ENCODE measurements at regions of chr22 and their contacts with region 1.

Region 1: DNA sequence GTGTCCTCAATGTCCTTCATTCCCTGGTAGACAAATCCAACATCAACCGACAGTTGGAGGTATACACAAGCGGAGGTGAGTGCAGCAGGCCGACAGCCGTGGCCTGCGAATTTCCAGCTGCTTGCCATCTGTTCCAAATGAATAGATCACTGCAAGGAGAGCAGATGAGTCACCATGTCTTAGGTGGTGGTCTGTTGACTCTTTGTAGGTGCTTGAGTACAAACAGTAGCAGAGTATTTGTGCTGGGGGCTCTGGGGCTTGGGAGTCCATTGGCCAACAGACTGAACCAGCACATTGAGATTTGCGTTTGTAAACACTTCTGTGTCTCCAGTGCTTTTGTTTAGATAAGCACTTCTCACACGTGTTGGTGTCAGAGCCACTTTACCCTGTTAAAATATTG is 21.1 kb downstream of the EIF3L start:
- DNase-seq: no peak
- H3K4me3 ChIP-seq: no peak overlapping the region
- H3K27ac ChIP-seq: no peak overlapping the region
- H3K4me1 ChIP-seq: no peaks in the 10 kb centered on the region
- H3K27me3 ChIP-seq: no peaks in the 10 kb centered on the region
- CTCF ChIP-seq: no peak

Region 2: GRCh38 chr22:38490915-38491314 is 620.6 kb after region 1 on chr22:
- CTCF ChIA-PET with region 1: no interaction called
- POLR2A ChIA-PET with region 1: no interaction called
- intact Hi-C with region 1: loop called (anchors 10 kb)
- DNase-seq: no peak
- H3K4me3 ChIP-seq: no peak overlapping the region
- H3K27ac ChIP-seq: peak overlapping the region; percentile 17
- H3K4me1 ChIP-seq: no peaks in the 10 kb centered on the region
- H3K27me3 ChIP-seq: no peaks in the 10 kb centered on the region
- CTCF ChIP-seq: no peak